HEK293T (cell line): ENCODE measurements at regions of chr12 and their contacts with region 1.

Region 1: GRCh38 chr12:1093166-1093751 is 102.2 kb downstream of the ERC1 start:
- DNase-seq: peak; percentile 36

Region 2: GRCh38 chr12:1108276-1108675 is 15.0 kb after region 1 on chr12:
- CTCF ChIA-PET with region 1: interaction called, 11 read pairs
- POLR2A ChIA-PET with region 1: no interaction called
- DNase-seq: no peak

Region 3: GRCh38 chr12:1126091-1126490 is 32.8 kb after region 1 on chr12:
- CTCF ChIA-PET with region 1: no interaction called
- POLR2A ChIA-PET with region 1: no interaction called
- DNase-seq: no peak

Region 4: DNA sequence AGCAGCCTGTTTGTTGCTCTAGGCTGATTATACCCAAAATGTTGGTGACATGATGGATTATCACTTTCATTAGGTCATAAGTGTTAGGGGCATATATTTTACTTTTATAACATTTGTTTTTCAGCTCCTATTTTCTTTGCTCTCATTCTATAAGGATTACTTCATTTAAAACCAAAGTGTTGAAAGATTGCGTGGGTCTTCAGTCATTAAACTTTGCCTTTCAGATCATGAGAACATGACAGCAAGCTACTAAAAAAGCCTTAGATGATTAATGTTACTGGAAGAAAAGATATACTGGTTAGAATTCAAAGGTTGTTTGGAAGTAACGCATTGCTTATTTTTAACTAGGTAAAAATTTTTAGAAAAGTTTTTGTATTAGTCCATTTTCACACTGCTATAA is 54.6 kb after region 1 on chr12:
- CTCF ChIA-PET with region 1: no interaction called
- POLR2A ChIA-PET with region 1: no interaction called
- DNase-seq: no peak

Region 5: DNA sequence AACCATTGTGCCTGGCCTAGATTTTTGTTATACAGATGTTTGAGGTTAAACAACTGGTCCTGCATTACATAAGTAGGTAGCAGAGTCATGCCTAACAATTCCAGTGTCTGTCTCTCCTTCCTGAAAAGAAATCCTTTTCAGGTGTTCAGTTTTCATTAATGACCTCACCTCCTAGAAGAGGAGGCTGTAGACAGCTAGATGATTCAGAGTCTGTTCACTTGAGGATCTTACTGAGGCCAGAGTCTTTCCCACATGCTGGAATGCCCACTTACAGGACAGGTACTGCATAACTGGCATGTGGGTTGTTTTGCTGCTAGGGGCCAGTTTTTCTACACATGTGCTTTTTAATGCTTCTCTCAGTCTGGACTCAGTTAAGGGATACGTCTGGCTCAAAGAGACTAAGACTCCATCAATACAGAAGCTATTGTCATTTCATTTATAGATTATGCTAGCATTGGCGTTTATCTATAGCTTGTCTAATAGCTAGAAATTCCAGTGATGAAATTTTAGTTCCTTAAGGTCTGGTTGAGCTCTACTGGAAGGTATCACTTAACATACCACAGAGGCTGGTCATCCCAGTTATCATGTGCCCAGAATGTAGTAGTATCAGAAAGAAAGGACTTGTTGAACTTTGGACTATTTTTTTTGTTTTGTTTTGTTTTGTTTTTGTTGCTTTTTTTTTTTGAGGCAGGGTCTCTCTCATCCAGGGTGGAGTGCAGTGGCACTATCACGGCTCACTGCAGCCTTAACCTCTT is 104.2 kb after region 1 on chr12:
- CTCF ChIA-PET with region 1: no interaction called
- POLR2A ChIA-PET with region 1: no interaction called
- DNase-seq: no peak